Activated CD4-positive, alpha-beta memory T cell treated with anti-CD3 and anti-CD28 coated beads for 36 hours (primary cell): ENCODE measurements at regions of chr3 and their contacts with region 1.

Region 1: DNA sequence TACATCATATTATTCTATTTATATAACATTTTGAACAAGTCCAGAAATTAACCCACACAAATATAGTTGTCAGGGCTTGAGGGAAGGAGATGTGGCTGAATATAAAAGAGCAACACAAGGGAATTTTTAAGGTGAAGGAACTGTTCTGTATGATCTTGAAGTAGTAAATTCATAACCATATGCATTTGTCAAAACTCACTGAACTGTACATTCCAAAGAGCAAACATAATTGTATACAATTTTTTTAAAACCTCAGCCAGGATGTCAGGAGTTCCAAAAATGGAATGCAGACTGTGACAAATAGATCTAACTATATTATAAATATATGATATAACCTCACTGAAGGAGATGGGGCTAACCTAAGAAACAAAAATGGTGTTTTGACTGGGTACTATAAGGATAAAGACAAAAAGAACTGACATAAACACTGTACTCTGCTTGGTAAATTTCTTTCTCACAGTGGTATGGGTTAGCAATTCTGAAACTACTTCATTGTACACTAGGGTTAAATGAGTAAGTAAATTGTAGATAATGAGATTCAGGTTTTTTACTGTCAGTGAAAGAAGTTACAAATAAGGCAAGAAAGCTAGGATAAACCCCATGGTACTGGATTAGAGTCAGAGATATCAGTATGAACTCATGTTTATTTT is 14.4 kb downstream of the GOLGB1 start:
- DNase-seq: no peak
- H3K4me3 Mint-ChIP-seq: no peak overlapping the region
- H3K27ac Mint-ChIP-seq: peak overlapping the region; percentile 28
- H3K4me1 Mint-ChIP-seq: peaks cover 46% of the 10 kb centered on the region
- H3K27me3 Mint-ChIP-seq: no peaks in the 10 kb centered on the region

Region 2: DNA sequence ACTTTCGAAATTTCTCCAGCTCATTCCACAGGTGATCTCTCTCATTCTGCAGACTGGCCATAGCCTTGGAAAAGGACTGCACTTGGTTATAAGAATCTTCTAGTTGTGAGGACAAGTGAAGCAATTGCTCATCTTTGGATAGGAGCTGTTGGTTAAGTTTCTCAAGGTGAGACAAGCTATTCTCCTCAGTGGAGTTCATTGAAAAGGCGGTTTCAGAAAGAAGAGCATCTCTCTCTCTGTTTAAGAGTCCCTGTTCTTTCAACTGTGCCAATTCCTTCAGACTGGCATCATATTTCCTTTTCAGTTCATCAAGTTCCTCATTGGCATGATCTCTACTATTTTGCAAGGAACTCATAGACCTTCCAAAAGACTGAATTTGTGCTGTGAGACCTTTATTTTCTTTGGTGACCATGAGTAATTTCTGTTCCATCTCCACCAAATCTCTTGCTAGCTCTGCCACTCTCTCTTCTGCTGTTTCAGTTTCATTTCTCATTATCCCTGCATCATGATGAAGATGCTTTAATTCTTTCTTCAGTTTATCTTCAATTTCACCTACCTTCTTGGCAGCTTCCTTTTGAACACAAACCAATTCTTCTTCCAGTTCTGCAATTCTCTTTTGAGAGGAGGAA is 44.3 kb before region 1 on chr3:
- CTCF ChIA-PET with region 1: no interaction called
- POLR2A ChIA-PET with region 1: no interaction called
- intact Hi-C with region 1: loop called (anchors 2 kb)
- DNase-seq: no peak
- H3K4me3 Mint-ChIP-seq: no peak overlapping the region
- H3K27ac Mint-ChIP-seq: peak overlapping the region; percentile 10
- H3K4me1 Mint-ChIP-seq: peaks cover 11% of the 10 kb centered on the region
- H3K27me3 Mint-ChIP-seq: no peaks in the 10 kb centered on the region

Region 3: GRCh38 chr3:121749276-121750086 is 14.3 kb after region 1 on chr3 and contains the start of gene GOLGB1:
- CTCF ChIA-PET with region 1: interaction called, 4 read pairs
- POLR2A ChIA-PET with region 1: interaction called, 8 read pairs
- intact Hi-C with region 1: loop called (anchors 1 kb)
- DNase-seq: peak; percentile 97
- H3K4me3 Mint-ChIP-seq: no peak within 1 kb of the TSS
- H3K27ac Mint-ChIP-seq: no peak within 1 kb of the TSS
- H3K4me1 Mint-ChIP-seq: peaks cover 10% of the 10 kb centered on the region
- H3K27me3 Mint-ChIP-seq: no peaks in the 10 kb centered on the region
- total RNA-seq, gene GOLGB1: 22.7 to 26.0 TPM

Region 4: DNA sequence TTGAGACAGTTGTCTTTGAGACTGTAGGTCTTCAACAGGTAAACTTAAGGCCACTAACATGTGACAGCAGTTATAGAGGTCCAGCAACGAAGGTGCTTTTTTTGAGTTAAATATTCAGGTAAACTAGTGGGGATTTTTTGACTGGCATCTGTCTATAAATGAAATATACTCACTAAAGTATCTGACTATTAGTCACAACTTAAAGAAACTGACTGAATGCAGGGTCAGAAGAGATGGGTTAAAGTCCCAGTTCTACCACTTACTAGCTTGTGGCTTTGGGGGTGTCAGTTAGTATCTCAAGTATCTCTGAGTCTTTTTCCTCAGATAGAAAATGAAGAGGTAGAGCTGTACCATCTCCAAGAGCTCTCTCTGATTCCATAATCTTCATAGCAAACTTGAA is 629.9 kb after region 1 on chr3:
- CTCF ChIA-PET with region 1: no interaction called
- POLR2A ChIA-PET with region 1: no interaction called
- intact Hi-C with region 1: loop called (anchors 5 kb)
- DNase-seq: no peak
- H3K4me3 Mint-ChIP-seq: no peak overlapping the region
- H3K27ac Mint-ChIP-seq: peak overlapping the region; percentile 94
- H3K4me1 Mint-ChIP-seq: peaks cover 26% of the 10 kb centered on the region
- H3K27me3 Mint-ChIP-seq: no peaks in the 10 kb centered on the region